CD4-positive, alpha-beta T cell (primary cell): ENCODE measurements at regions of chr10 and their contacts with region 1.

Region 1: DNA sequence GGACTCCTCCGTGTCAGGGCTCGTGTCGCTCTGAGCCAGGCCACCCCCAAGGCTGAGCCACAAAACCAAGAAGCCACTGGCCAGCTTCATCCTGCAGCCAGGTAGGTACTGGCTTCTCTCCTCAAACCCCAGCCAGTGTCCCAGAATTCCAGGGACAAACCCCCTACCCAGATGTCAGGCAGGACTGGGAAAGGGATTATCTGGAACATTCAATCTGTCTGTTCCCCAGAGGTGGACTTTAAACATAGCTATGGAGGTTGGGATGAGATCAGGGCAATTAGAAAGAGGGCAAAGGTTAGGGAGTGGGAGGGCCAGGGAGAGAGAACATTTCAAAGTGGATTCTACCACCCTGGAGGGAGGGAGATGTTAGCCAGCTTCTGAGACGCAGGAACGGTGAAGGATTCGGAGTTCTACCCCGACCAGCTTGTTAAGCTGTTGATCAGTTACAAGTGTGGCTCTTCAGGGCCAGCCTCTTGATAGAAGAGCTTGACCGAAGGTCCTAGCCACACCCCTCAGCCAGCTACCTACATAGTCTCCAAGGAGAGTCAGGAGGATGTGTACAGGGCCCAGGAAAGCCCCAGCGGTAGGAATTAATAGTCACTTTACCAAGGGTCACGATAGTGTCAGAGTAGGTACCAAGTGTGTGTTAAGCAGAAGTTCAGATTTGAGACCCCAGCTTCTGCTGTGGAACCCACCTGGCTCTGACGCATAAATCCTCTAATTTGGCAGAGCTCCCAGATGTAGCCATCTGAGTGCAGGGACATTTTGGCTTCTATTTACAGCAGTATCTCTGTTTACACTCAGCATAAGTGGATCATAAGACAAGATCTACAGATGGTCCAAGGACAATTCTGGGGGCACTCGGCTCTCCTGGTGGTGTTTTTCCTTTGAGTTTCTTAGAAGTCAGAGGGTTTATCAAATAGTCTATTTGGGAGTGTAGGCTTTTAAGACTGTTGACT is at the start of gene PLA2G12B:
- DNase-seq: no peak
- ATAC-seq: no peak
- H3K4me3 ChIP-seq: no peak within 1 kb of the TSS
- H3K4me3 Mint-ChIP-seq: no peak within 1 kb of the TSS
- H3K27ac ChIP-seq: no peak within 1 kb of the TSS
- H3K27ac Mint-ChIP-seq: no peak within 1 kb of the TSS
- H3K4me1 ChIP-seq: no peaks in the 10 kb centered on the region
- H3K4me1 Mint-ChIP-seq: no peaks in the 10 kb centered on the region
- H3K27me3 ChIP-seq: peaks cover 0 to 2% of the 10 kb centered on the region in 2 experiments
- H3K27me3 Mint-ChIP-seq: peaks cover 21% of the 10 kb centered on the region
- CTCF ChIP-seq: no peak
- total RNA-seq, gene PLA2G12B: not detected

Region 2: GRCh38 chr10:72038458-72039001 is 916.3 kb before region 1 on chr10:
- CTCF ChIA-PET with region 1: no interaction called
- POLR2A ChIA-PET with region 1: no interaction called
- intact Hi-C with region 1: loop called in 1 of 2 experiments (anchors 5 kb)
- DNase-seq: no peak
- ATAC-seq: no peak
- H3K4me3 ChIP-seq: no peak overlapping the region
- H3K4me3 Mint-ChIP-seq: no peak overlapping the region
- H3K27ac ChIP-seq: no peak overlapping the region
- H3K27ac Mint-ChIP-seq: no peak overlapping the region
- H3K4me1 ChIP-seq: no peaks in the 10 kb centered on the region
- H3K4me1 Mint-ChIP-seq: no peaks in the 10 kb centered on the region
- H3K27me3 ChIP-seq: no peaks in the 10 kb centered on the region
- H3K27me3 Mint-ChIP-seq: no peaks in the 10 kb centered on the region
- CTCF ChIP-seq: no peak

Region 3: DNA sequence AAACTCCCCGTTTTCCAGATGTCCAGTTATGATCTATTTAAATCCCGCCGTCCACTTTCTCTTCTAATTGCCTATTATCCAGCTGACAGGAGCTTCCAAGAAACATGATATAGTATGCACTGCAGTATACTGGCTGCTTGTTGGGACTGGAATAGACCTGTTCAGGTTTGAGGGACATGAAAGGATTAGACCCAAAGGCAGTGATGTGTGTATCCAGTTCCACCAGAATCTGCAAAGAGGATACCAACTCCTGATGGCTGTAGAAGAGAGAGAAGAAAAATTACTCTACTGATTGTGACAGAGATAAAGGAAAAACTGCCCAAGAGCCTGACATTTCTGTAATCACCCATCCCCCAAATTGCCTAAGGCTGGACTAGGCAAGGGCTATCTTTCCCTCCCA is 469.6 kb after region 1 on chr10:
- CTCF ChIA-PET with region 1: no interaction called
- POLR2A ChIA-PET with region 1: no interaction called
- intact Hi-C with region 1: no loop called
- DNase-seq: no peak
- ATAC-seq: no peak
- H3K4me3 ChIP-seq: no peak overlapping the region
- H3K4me3 Mint-ChIP-seq: no peak overlapping the region
- H3K27ac ChIP-seq: no peak overlapping the region
- H3K27ac Mint-ChIP-seq: no peak overlapping the region
- H3K4me1 ChIP-seq: no peaks in the 10 kb centered on the region
- H3K4me1 Mint-ChIP-seq: no peaks in the 10 kb centered on the region
- H3K27me3 ChIP-seq: no peaks in the 10 kb centered on the region
- H3K27me3 Mint-ChIP-seq: no peaks in the 10 kb centered on the region
- CTCF ChIP-seq: no peak